Activated CD4-positive, alpha-beta memory T cell treated with anti-CD3 and anti-CD28 coated beads, Interleukin-2, amount 10 ng/mL, durations not matched to agents 7 days and 5 days (primary cell): ENCODE measurements at regions of chr12 and their contacts with region 1.

Region 1: DNA sequence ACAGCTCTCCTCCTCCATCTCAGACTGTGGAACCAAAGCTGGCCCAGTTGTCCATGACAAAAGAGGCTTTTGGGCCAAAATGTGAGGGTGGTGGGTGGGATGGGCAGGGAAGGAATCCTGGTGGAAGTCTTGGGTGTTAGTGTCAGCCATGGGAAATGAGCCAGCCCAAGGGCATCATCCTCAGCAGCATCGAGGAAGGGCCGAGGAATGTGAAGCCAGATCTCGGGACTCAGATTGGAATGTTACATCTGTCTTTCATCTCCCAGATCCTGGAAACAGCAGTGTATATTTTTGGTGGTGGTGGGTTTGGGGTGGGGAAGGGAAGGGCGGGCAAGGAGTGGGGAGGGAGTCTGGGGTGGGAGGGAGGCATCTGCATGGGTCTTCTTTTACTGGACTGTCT is 11.8 kb upstream of the TAMALIN start:
- DNase-seq: no peak
- H3K4me3 Mint-ChIP-seq: no peak overlapping the region
- H3K27ac Mint-ChIP-seq: no peak overlapping the region
- H3K4me1 Mint-ChIP-seq: peaks cover 4% of the 10 kb centered on the region
- H3K27me3 Mint-ChIP-seq: no peaks in the 10 kb centered on the region

Region 2: GRCh38 chr12:52121824-52122539 is 127.0 kb after region 1 on chr12:
- CTCF ChIA-PET with region 1: interaction called, 11 read pairs
- POLR2A ChIA-PET with region 1: no interaction called
- DNase-seq: peak; percentile 71
- H3K4me3 Mint-ChIP-seq: no peak overlapping the region
- H3K27ac Mint-ChIP-seq: no peak overlapping the region
- H3K4me1 Mint-ChIP-seq: peaks cover 20% of the 10 kb centered on the region
- H3K27me3 Mint-ChIP-seq: peaks cover 15% of the 10 kb centered on the region